Ovary (tissue), 10 donors: ENCODE measurements at regions of chr16 and their contacts with region 1.

Region 1: DNA sequence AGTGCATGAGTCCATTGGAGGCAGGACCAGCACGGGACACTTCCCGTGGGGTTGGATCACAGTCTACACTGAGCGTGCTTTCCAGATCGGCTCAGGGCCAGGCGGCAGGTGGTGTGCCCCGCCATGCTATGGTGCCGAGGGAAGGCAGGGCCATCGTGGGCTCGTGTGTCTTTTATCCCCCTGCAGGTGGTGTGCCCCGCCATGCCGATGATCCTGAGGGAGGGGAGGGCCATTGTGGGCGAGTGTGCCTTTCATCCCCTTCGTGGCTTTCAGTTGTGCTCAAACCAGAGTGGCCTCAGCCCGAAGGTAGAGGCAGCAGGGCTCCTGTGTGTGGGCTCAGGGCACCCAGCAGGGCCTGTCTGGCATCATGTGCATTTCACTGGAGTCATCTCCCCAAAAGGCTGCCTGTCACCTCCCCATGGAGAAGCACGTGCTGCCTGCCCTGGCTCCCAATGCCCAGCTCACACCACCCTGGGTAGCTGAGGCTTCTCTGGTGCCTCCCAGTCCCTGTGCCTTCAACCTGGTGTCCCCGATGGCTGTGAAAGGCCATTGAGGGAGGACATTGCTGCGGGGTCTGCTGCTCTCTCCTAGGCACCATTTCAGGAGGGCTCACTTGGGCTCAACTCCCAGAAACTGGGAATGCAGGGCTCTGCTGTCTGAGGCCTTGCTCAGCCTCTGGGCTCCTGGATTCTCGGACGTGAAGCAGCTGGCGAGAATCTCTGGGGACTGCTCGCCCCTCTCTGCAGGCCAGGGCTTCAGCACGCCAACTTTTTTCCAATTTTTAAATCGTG is 207.6 kb downstream of the NPIPB11 start:
- DNase-seq: peak in 4 of 5 donors; percentile 44 to 57 (median 49)
- H3K4me3 ChIP-seq: no peak overlapping the region
- H3K27ac ChIP-seq: peak overlapping the region; percentile 86 to 88
- H3K4me1 ChIP-seq: peaks cover 23% of the 10 kb centered on the region
- H3K27me3 ChIP-seq: no peaks in the 10 kb centered on the region
- CTCF ChIP-seq: no peak
- EP300 ChIP-seq: no peak
- POLR2A ChIP-seq: no peak

Region 2: GRCh38 chr16:29139261-29139811 is 59.6 kb before region 1 on chr16:
- intact Hi-C with region 1: no loop called
- DNase-seq: peak in 4 of 5 donors; percentile 64 to 77 (median 68)
- H3K4me3 ChIP-seq: peak overlapping the region; percentile 14
- H3K27ac ChIP-seq: peak overlapping the region in 1 of 2 donors; percentile 53
- H3K4me1 ChIP-seq: peaks cover 8% of the 10 kb centered on the region
- H3K27me3 ChIP-seq: no peaks in the 10 kb centered on the region
- CTCF ChIP-seq: no peak
- EP300 ChIP-seq: no peak
- POLR2A ChIP-seq: peak; percentile 32

Region 3: GRCh38 chr16:29156511-29156910 is 42.4 kb before region 1 on chr16:
- intact Hi-C with region 1: loop called in 1 of 4 experiments (anchors 2 kb)
- DNase-seq: peak in 3 of 5 donors; percentile 39 to 46 (median 44)
- H3K4me3 ChIP-seq: no peak overlapping the region
- H3K27ac ChIP-seq: peak overlapping the region; percentile 37 to 95
- H3K4me1 ChIP-seq: peaks cover 44% of the 10 kb centered on the region
- H3K27me3 ChIP-seq: no peaks in the 10 kb centered on the region
- CTCF ChIP-seq: no peak
- EP300 ChIP-seq: no peak
- POLR2A ChIP-seq: no peak

Region 4: DNA sequence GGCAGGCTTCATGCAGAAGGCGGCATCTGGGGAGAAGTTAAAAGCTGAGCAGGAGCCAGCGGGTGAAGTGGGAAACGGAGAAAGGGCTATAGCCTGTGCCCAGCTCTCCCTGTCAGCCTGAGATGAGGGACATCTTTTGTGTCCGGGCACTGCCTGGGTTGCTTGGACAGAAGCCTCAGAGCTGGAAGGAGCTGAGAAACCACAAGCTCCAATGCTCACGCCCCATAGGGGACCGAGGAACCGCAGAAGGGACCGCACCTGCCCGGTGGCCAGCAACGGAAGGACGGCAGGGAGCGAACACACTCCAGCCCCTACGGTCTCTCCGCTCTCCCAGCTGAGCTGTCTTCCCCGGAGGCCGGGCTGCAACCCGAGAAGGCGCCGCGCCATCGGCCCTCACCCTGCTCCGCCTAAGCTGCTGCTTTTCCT is 31.8 kb after region 1 on chr16:
- intact Hi-C with region 1: no loop called
- DNase-seq: peak in 3 of 5 donors; percentile 50 to 75 (median 66)
- H3K4me3 ChIP-seq: no peak overlapping the region
- H3K27ac ChIP-seq: peak overlapping the region; percentile 66 to 81
- H3K4me1 ChIP-seq: peaks cover 9% of the 10 kb centered on the region
- H3K27me3 ChIP-seq: no peaks in the 10 kb centered on the region
- CTCF ChIP-seq: no peak
- EP300 ChIP-seq: no peak
- POLR2A ChIP-seq: no peak